ENCODE measurements at regions of chr19 and their contacts with region 1.

Region 1: GRCh38 chr19:11881151-11881800 is 6.3 kb upstream of the ZNF69 start:
- DNase-seq: peak; percentile 78
- H3K4me3 Mint-ChIP-seq: no peak overlapping the region
- H3K27ac Mint-ChIP-seq: no peak overlapping the region
- H3K4me1 Mint-ChIP-seq: no peaks in the 10 kb centered on the region
- H3K27me3 Mint-ChIP-seq: no peaks in the 10 kb centered on the region

Region 2: DNA sequence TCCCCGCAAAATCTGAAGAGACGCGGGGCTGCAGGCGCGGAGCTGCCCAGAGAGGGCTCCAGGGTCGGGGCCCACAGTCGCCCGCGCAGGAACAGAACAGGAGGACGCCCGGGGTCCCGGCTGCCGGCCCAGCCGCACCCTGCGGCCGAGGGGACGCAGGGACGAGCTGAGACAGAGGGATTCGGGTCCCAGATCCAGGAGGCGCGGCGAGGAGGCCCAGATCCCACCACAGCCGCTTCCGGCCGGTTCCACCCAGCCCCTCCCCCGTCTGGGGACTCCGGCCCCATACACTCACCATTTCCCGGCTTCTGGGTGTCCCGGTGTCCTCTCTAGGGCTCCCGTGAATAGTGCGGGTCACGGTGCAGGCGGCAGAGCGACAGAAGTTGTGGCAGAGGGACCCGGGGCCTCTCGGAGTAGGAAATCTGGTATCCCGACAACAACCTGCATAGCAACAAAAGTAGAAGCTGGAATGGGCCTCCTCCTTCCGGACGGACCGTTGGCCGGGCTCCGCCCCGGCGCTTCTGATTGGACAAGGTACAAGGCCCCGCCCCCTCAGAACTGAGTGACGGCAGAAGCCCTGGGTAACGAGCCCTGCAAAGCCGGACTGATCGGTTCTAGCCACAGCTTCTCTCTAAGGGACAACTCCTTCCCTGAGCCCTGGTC is 258.7 kb after region 1 on chr19 and contains the start of gene ZNF20:
- CTCF ChIA-PET with region 1: interaction called, 5 read pairs
- intact Hi-C with region 1: loop called (anchors 1 kb)
- DNase-seq: peak; percentile 95
- H3K4me3 Mint-ChIP-seq: peak within 1 kb of the TSS; percentile 92
- H3K27ac Mint-ChIP-seq: peak within 1 kb of the TSS; percentile 65
- H3K4me1 Mint-ChIP-seq: peaks cover 32% of the 10 kb centered on the region
- H3K27me3 Mint-ChIP-seq: no peaks in the 10 kb centered on the region
- total RNA-seq, gene ZNF20: 2.1 to 3.1 TPM

Measured in activated naive CD4-positive, alpha-beta T cell treated with anti-CD3 and anti-CD28 coated beads for 36 hours (primary cell).